ENCODE measurements at regions of chr1 and their contacts with region 1.

Region 1: DNA sequence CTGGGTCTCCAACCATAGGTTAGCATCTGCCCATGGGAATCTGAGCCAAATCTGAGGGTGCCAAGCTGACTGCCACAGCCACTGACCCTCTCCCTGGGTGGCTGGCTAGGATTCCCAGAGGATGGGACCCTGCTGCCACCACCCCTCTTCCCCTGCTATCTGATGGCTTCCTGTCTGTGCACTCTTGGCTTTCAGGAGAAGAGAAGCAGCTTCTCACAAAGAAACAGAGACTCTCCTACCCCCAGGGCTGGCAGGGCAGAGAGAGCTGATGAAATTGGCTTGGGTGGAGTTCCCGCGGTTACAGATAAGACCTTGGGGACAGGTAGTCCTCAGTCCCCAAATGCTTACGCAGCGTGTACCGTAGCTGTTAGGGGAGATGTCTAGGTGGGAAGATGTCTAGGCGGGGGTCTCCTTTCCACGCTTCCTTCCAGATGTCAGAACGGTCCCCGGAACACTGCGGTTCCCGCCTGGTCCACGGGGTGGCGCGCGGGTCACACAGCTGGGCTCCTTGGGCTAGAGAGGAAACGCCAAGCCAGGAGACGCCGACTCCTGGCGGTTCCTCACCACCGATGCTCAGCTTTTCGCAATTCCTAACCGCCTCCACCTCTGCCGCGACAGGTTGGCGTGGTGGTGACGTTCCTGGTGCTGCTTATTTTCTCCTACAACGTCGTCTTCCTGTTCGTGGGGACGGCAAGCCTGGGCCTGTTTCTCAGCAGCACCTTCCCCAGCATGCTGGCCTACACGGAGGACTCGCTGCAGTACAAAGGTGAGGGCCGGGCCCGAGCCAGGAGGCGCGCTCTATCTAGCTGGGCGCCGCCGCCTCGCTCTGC is 40.1 kb downstream of the ELK4 start:
- DNase-seq: peak; percentile 83
- H3K4me3 ChIP-seq: peak overlapping the region; percentile 64
- H3K27ac ChIP-seq: no peak overlapping the region
- H3K4me1 ChIP-seq: peaks cover 21% of the 10 kb centered on the region
- H3K27me3 ChIP-seq: no peaks in the 10 kb centered on the region
- CTCF ChIP-seq: peak; percentile 99

Region 2: DNA sequence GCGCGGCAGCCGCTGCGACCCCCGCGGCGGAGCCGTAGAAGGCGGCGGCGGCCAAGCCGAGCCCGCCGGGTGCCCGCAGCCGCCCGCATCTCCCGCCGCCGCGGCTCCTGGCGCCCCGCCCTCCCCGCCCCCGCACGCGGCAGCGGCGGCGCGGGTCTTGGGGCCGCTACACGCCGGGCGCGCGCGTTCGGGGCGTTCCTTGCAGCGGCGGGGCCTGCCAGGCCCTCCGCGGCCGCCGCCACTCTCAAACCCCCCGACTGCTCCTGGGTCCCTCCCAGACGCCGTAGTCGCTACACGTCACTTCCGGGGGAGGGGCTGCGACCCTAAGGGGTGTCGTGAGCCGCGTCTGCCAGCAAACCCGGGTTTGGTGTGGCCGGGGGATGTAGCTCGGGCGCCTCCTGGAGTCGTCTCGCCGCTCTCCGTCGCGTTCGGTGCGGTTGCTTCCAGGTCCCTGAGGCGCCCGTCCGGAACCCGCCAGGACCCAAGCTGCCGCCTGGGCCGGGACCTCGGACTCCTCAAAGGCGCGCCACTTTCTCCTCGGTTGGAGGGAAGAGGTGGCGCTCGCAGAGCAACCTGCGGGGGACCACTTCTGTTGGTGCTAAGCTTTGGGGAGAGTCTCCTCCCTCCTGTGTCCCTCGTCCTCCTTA is 40.1 kb after region 1 on chr1 and contains the start of gene ELK4:
- intact Hi-C with region 1: loop called (anchors 5 kb)
- DNase-seq: peak; percentile 99
- H3K4me3 ChIP-seq: peak within 1 kb of the TSS; percentile 80
- H3K27ac ChIP-seq: peak within 1 kb of the TSS; percentile 96
- H3K4me1 ChIP-seq: peaks cover 48% of the 10 kb centered on the region
- H3K27me3 ChIP-seq: no peaks in the 10 kb centered on the region
- CTCF ChIP-seq: peak; percentile 83
- total RNA-seq, gene ELK4: 36.3 TPM

Region 3: GRCh38 chr1:205658943-205659581 is 67.3 kb after region 1 on chr1:
- intact Hi-C with region 1: loop called (anchors 5 kb)
- DNase-seq: peak; percentile 81
- H3K4me3 ChIP-seq: no peak overlapping the region
- H3K27ac ChIP-seq: no peak overlapping the region
- H3K4me1 ChIP-seq: peaks cover 21% of the 10 kb centered on the region
- H3K27me3 ChIP-seq: no peaks in the 10 kb centered on the region
- CTCF ChIP-seq: peak; percentile 92

Region 4: DNA sequence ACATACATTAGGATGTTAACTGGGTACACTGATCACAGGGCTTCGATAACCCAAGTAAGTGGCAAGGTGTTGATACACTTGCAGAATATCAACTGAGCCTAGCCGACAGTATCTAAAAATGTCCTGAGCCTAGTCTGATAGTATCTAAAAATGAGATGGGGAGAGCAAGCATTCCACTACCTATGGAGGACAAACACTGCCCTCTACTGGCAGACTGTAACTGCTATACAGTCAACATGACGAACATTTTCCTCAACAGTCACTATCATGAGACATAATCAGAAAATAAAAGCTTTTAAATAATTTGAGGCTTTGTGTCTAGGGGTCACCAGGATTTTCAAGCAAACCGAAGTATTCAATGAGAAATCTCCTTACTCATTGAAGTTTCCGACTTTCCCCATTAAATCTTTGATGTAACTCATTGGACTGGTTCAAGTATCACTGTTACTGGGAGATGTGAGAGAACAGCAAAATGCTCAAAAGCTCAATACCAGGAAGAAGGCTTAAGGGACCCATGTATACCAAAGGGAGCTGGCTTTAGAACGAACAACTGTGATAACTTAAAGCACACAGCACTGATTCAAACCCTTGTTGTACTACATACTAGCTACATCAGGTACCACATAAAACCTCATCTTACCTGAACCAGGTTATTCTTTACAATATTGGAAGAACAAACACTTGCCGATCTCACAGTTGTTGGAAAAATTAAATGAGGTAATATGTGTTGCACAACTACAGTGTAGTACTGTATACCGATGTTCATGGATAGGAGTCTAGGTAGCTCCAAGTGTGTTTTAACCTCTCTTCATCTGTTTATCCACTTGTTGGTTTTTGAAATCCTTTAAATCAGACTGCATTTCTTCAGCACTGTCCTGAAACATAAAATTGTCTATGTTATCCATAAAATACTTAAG is 119.6 kb after region 1 on chr1:
- intact Hi-C with region 1: loop called (anchors 5 kb)
- DNase-seq: no peak
- H3K4me3 ChIP-seq: no peak overlapping the region
- H3K27ac ChIP-seq: peak overlapping the region; percentile 9
- H3K4me1 ChIP-seq: peaks cover 27% of the 10 kb centered on the region
- H3K27me3 ChIP-seq: no peaks in the 10 kb centered on the region
- CTCF ChIP-seq: peak; percentile 92